Activated CD4-positive, alpha-beta memory T cell treated with anti-CD3 and anti-CD28 coated beads for 36 hours (primary cell): ENCODE measurements at regions of chr13 and their contacts with region 1.

Region 1: DNA sequence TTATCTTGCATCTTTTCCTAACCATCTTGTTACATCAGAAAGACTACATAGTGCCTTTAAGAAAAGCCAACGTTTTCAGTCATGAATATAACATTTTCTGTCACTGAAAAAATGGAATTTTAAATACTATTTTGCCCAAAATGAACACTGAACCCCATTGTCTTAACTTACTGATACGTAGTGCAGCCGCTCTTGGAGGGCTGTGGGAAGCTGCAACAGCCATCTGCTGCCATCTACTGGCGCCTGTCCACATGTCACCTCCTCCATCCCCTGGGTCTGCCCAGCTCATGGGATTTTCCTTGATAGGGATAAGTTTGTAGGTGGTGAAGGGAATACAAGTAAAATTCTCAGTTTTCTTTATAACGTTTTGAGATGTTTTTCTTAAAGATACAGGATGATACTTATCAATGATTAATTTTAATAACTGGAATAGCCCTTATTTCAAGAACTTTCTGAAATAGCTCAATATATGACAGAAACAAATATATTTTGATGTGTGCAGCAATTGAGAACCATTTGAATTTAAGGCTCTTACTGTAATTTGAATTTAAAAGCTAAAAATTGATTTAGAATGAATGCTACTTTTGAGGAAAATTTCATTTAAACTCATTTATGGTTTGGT is 73.7 kb downstream of the GGACT start:
- DNase-seq: peak; percentile 82
- H3K4me3 Mint-ChIP-seq: no peak overlapping the region
- H3K27ac Mint-ChIP-seq: no peak overlapping the region
- H3K4me1 Mint-ChIP-seq: peaks cover 21% of the 10 kb centered on the region
- H3K27me3 Mint-ChIP-seq: peaks cover 14% of the 10 kb centered on the region

Region 2: DNA sequence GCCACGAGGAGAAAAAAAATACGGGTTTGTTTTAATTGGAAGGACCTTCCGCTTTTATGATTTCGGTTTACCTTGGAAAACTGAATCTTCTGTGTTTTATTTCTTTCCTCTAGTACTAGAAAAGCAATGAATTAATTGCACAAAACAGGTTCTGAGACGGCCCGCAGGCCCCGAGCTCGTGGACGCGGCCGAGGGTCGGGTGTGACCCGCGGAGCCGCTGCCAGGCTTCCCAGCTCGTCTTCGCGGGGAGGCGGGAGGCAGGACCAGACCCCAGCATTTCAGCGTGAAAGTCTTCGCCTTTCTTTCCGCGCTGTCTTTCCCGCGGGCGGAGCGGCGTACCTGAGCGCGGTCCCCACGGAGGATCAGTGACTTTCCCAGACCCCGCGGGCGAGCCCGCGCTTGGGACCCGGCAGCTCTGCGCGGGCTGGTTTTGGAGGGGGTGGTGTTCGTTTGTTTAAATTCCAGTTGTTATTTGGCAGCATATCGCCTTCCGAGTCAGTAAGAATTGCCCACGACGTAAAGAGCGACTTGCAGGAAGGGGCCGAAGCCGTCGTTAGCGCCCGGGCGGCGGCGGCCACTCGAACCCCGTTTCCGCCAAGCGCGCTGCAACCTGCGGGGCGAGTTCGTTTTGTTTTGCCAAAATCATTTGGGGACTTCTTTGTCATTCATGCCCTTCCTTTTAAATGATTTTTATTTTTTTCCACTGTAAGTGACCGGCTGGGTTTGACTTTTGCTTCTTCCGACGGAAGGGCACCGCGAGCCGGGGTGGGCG is 619.5 kb before region 1 on chr13:
- CTCF ChIA-PET with region 1: interaction called, 27 read pairs
- POLR2A ChIA-PET with region 1: no interaction called
- intact Hi-C with region 1: no loop called
- DNase-seq: no peak
- H3K4me3 Mint-ChIP-seq: peak overlapping the region; percentile 59
- H3K27ac Mint-ChIP-seq: no peak overlapping the region
- H3K4me1 Mint-ChIP-seq: peaks cover 9% of the 10 kb centered on the region
- H3K27me3 Mint-ChIP-seq: peaks cover 39% of the 10 kb centered on the region

Region 3: DNA sequence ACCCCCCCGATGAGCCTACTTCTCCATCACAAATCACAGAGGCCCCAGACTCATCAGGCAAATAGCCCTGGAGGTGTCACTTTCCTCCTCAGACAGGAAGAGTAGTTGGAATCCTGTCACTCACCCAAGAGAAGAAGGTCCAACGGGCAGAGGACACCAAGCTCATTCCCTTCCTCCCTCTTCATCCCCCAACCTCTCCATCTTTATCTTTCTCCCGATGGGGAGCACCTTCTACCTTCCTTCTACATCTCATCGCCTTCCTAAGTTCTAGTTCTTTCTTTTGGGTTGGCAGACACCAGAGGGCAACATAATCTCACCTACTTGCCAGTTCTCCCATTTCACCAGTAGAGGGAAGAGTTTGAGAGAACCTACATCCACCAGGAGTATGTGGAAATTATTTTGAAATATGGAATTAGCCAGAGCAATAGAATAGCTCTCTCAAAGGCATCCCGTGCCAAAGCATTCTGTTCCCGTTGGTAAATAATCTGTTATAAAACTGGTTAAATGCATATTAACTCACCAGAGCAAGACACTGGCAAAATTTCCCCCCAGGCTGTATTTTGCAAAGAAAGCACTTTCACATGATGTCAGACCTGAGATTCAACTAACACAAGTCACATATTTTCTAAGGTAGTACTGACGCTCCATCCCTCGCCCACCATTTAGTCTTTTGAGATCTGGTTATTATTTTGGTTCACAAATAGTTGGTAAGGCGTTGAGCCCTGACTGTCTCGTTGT is 598.4 kb before region 1 on chr13:
- CTCF ChIA-PET with region 1: interaction called, 24 read pairs
- POLR2A ChIA-PET with region 1: no interaction called
- intact Hi-C with region 1: loop called (anchors 1 kb)
- DNase-seq: no peak
- H3K4me3 Mint-ChIP-seq: no peak overlapping the region
- H3K27ac Mint-ChIP-seq: no peak overlapping the region
- H3K4me1 Mint-ChIP-seq: peaks cover 19% of the 10 kb centered on the region
- H3K27me3 Mint-ChIP-seq: peaks cover 5% of the 10 kb centered on the region

Region 4: DNA sequence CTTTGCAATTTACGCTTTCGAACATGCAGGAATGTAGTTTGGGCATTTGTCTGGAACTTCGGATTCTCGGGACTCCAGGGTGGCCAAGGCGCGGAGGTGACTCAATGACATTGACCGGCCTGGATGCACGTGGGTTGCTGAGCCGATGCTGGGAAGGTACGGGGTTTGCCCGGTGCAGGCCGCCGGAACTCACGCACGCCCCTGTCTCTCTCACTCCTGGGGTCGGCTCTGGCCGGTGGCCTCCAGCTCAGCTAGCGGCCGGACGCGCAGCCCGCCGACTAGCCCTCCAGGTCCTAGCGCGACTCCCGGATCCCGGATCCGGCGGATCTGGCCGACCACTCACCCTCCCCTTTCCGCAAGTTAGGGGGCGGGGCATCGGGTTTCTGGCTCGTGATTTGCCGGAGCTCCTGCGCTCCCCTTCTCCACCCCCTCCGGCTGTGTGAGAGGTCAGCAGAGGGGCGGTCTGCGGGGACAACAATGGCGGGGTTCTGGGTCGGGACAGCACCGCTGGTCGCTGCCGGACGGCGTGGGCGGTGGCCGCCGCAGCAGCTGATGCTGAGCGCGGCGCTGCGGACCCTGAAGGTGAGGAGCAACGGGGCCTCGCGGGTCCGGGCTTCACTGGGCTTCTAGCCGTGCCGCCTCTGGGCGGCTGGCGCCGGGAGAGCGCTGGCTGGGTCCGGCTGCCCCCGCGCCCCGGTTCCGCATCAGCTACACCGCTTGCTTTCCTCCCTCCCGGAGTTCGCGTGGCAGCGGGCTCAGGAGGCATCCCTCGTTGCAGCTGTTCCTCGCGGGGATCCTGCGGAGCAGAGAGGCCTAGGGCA is 426.0 kb before region 1 on chr13 and contains the start of gene PCCA:
- CTCF ChIA-PET with region 1: interaction called, 7 read pairs
- POLR2A ChIA-PET with region 1: no interaction called
- intact Hi-C with region 1: loop called (anchors 5 kb)
- DNase-seq: peak; percentile 90
- H3K4me3 Mint-ChIP-seq: peak within 1 kb of the TSS; percentile 95
- H3K27ac Mint-ChIP-seq: peak within 1 kb of the TSS; percentile 36
- H3K4me1 Mint-ChIP-seq: peaks cover 20% of the 10 kb centered on the region
- H3K27me3 Mint-ChIP-seq: no peaks in the 10 kb centered on the region
- total RNA-seq, gene PCCA: 7.9 to 8.2 TPM

Region 5: GRCh38 chr13:100454876-100455275 is 60.0 kb before region 1 on chr13:
- CTCF ChIA-PET with region 1: no interaction called
- POLR2A ChIA-PET with region 1: no interaction called
- intact Hi-C with region 1: no loop called
- DNase-seq: no peak
- H3K4me3 Mint-ChIP-seq: no peak overlapping the region
- H3K27ac Mint-ChIP-seq: no peak overlapping the region
- H3K4me1 Mint-ChIP-seq: peaks cover 6% of the 10 kb centered on the region
- H3K27me3 Mint-ChIP-seq: no peaks in the 10 kb centered on the region

Region 6: DNA sequence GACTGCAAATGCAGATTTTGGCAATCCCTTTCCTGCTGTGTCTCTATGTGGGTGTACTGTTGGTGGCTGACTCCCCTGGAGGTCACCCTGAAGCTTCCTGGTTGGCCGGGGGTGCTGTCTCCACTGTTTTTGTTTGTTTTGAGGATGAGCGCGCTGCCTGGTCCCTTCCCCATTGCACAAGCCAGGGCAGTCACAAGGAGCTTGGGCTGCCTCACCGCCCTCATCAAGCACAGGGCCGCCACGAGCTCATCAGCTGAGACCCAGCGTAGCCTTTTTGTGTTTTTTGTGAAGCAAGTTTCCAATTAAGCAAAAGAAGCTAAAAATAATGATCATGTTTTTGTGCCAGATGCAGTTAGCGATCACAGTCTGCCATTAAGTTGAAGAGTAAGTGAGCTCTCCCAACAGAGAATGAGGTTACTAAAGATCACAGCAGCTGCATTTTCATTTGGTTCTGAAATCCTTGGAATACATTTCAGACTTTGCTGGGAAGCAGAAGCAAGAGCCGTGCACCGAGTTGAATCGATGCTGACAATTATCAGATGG is 15.8 kb after region 1 on chr13:
- CTCF ChIA-PET with region 1: interaction called, 10 read pairs
- POLR2A ChIA-PET with region 1: no interaction called
- intact Hi-C with region 1: no loop called
- DNase-seq: no peak
- H3K4me3 Mint-ChIP-seq: no peak overlapping the region
- H3K27ac Mint-ChIP-seq: no peak overlapping the region
- H3K4me1 Mint-ChIP-seq: no peaks in the 10 kb centered on the region
- H3K27me3 Mint-ChIP-seq: no peaks in the 10 kb centered on the region

Region 7: GRCh38 chr13:100542826-100543156 is 27.9 kb after region 1 on chr13:
- CTCF ChIA-PET with region 1: no interaction called
- POLR2A ChIA-PET with region 1: no interaction called
- intact Hi-C with region 1: no loop called
- DNase-seq: peak; percentile 20
- H3K4me3 Mint-ChIP-seq: no peak overlapping the region
- H3K27ac Mint-ChIP-seq: no peak overlapping the region
- H3K4me1 Mint-ChIP-seq: peaks cover 27% of the 10 kb centered on the region
- H3K27me3 Mint-ChIP-seq: no peaks in the 10 kb centered on the region